Activated CD4-positive, alpha-beta memory T cell treated with anti-CD3 and anti-CD28 coated beads, Interleukin-2, amount 10 ng/mL, durations not matched to agents 7 days and 5 days (primary cell): ENCODE measurements at regions of chr13 and their contacts with region 1.

Region 1: DNA sequence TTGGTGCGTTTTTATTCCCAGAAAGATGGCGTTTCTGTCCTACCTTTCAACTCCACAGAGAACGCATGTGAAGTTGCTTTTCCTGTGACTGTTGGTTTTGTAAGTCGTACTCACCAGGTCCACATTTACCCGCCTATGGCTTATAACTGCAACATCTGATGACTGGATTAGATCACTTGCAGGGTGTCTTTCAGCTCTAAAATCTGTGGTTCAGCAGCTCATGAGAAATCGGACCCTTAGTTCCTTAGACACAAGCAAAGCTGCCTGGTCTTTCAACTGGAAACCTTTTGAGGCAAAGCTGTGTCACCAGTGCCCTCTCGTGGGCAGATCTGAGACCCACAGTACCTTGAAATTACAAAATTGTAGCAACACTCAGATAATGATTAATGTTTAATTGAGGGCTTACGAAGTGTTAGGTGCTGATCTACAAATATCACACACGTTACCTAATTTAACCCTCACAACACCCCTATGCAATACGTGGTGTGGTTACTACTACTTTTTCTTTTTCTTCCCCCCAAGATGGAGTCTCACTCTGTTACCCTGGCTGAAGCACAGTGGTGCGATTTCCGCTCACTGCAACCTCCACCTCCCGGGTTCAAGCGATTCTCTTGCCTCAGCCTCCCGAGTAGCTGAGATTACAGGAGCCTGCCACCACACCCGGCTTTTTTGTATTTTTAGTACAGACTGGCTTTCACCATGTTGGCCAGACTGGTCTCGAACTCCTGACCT is 65.4 kb downstream of the RUBCNL start:
- DNase-seq: peak; percentile 76
- H3K4me3 Mint-ChIP-seq: peak overlapping the region; percentile 46
- H3K27ac Mint-ChIP-seq: peak overlapping the region; percentile 34
- H3K4me1 Mint-ChIP-seq: peaks cover 15% of the 10 kb centered on the region
- H3K27me3 Mint-ChIP-seq: no peaks in the 10 kb centered on the region

Region 2: DNA sequence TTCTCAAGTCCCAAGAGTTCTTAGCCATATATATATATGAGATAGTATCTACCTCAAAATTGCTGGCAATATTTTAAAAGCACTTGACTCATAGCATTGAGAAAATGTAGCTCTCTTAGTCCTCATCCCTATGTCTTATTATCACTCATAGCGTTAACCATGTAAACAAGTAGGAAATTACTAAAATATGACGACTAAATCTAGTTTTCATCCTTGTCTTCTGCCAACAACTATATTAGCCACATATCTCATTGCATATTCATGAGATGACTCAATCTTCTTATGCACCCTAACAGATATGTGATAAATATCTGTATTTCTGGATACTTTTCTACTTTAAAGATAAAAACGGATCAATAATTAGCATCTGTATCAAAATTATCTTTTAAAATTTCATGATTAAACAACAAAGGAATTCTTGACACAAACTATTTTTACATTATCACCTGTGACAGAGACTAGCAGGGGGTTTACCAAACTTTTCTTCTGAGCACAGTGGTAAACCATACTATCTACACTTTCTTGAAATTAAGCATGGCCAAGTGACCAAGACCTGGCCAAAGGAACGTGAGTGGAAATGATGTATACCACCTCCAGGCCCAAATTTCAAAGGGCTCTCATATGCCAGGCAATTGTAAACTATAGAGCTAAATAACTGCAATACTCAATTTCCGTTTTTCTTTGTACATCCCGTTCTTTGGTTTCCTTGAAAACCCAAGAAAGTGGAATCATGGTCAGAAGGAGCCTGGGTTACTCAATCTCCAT is 314.8 kb before region 1 on chr13:
- CTCF ChIA-PET with region 1: no interaction called
- POLR2A ChIA-PET with region 1: no interaction called
- DNase-seq: no peak
- H3K4me3 Mint-ChIP-seq: no peak overlapping the region
- H3K27ac Mint-ChIP-seq: no peak overlapping the region
- H3K4me1 Mint-ChIP-seq: no peaks in the 10 kb centered on the region
- H3K27me3 Mint-ChIP-seq: no peaks in the 10 kb centered on the region

Region 3: DNA sequence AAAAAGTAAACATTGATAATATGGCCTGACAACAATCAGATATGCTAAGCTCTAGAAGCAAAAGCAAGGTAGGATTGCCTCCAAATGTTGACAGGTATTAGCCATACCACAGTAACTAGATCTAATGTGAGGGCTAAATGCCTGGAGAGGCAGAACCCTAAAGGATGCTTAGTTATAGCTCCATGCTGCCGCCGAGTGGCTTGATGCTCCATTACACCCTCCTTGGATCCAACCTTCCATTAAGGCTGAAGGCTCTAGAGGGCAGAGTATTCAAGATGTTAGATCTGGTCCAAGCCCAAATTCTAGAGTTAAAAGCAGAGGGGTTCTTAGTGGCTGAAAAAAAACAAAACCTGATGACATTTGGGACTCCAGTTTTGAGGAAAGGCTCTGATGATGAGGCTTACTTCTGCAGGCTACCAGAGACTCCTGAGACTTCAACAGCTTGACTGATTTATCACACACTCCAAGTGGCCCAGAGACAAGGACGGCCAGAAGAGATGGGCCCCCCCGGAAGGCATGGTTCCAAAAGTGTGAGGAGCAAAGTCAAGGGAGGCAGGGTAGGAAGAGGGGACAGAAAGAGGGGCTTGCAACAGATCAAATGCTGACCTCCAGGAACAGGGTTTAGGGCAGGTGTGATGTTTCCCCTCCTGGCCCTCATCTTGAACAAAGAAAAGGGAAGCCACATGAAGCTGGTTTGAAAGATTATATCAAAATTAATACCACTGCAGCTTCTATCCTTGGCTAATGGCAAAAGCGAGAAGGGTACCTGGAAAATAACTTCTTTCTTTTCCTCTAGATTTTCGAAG is 194.9 kb before region 1 on chr13:
- CTCF ChIA-PET with region 1: interaction called, 11 read pairs
- POLR2A ChIA-PET with region 1: no interaction called
- DNase-seq: peak; percentile 72
- H3K4me3 Mint-ChIP-seq: no peak overlapping the region
- H3K27ac Mint-ChIP-seq: peak overlapping the region; percentile 21
- H3K4me1 Mint-ChIP-seq: peaks cover 34% of the 10 kb centered on the region
- H3K27me3 Mint-ChIP-seq: no peaks in the 10 kb centered on the region

Region 4: DNA sequence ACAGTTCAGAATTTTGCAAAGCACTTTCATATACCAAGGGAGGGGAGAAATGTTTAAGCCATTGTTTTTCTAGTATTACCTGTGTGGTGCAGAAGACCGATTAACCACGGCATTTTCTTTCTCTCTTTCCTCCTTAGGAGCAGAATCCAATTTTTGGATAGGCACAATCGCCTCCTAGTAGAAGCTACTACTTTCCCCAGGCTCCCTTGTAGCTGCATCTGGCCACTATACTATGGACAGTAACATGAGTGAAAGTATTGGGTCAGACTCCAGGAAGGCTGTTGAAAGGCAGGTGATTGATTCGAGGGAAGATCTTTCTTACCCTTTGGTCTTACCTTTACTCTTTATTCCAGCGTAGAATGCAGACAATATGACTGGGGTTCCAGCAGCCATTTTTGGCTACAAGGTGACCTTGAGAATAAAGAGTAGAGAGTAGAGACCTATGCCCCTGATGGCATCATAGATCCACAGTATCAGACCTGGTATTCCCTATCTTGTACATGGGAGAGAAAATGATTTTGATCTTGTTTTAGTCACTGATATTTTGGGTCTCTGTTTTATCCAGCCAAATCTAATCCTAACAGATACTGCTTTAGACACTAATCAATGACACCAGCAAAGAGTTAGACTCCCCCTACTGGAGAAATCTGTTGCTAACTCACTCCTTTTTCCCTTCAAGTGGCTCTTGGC is 32.9 kb before region 1 on chr13:
- CTCF ChIA-PET with region 1: interaction called, 10 read pairs
- POLR2A ChIA-PET with region 1: no interaction called
- DNase-seq: no peak
- H3K4me3 Mint-ChIP-seq: no peak overlapping the region
- H3K27ac Mint-ChIP-seq: no peak overlapping the region
- H3K4me1 Mint-ChIP-seq: peaks cover 10% of the 10 kb centered on the region
- H3K27me3 Mint-ChIP-seq: no peaks in the 10 kb centered on the region

Region 5: GRCh38 chr13:46295491-46296114 is 26.1 kb before region 1 on chr13:
- CTCF ChIA-PET with region 1: interaction called, 19 read pairs
- POLR2A ChIA-PET with region 1: interaction called, 5 read pairs
- DNase-seq: peak; percentile 82
- H3K4me3 Mint-ChIP-seq: peak overlapping the region; percentile 59
- H3K27ac Mint-ChIP-seq: peak overlapping the region; percentile 98
- H3K4me1 Mint-ChIP-seq: peaks cover 41% of the 10 kb centered on the region
- H3K27me3 Mint-ChIP-seq: no peaks in the 10 kb centered on the region